ENCODE measurements at regions of chr5 and their contacts with region 1.

Region 1: DNA sequence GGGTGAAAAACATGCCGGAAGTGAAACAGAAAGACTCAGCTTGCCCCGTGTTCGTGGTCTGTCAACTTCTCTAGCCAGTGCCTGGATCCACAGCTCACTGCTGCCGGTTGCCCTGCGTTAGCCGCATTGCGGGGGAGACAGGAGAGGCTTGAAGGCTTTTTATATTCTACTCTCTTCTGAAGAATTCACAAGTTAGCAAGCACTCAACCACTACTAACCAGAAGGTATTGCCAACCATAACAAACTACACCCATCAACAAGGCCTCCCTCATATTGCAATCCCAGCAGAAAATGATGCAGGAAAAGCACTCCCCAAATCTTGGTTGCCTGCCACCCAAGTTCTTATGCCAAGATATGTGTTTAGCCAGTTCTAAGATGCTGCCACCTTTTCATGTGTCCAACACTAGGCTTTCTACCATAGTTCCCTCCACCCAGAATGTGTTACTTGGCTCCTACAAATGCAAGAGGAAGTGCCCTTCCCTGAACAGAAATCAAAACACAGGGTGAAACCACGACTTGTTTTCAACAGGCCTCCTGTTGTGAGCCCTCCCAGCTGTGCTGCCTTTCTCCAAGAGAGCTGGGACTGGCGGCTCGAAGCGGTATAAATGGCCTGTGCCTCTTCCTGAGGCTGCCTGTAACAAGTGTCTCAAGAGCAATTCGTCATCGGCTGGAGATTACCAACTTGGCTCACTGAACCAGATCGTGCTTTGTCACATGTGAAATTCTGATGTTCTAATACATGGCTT is 129.0 kb downstream of the SNX18 start:
- DNase-seq: peak; percentile 93 to 96 (median 93)
- ATAC-seq: peak; percentile 97 to 98
- H3K4me3 ChIP-seq: no peak overlapping the region
- H3K27ac ChIP-seq: peak overlapping the region; percentile 92
- H3K4me1 ChIP-seq: peaks cover 12% of the 10 kb centered on the region
- H3K27me3 ChIP-seq: no peaks in the 10 kb centered on the region

Region 2: GRCh38 chr5:54844905-54845566 is 198.5 kb after region 1 on chr5:
- intact Hi-C with region 1: loop called in 1 of 4 experiments (anchors 10 kb)
- DNase-seq: no peak
- ATAC-seq: peak in 1 of 2 donors; percentile 46
- H3K4me3 ChIP-seq: no peak overlapping the region
- H3K27ac ChIP-seq: no peak overlapping the region
- H3K4me1 ChIP-seq: no peaks in the 10 kb centered on the region
- H3K27me3 ChIP-seq: no peaks in the 10 kb centered on the region